HepG2 (cell line): ENCODE measurements at regions of chr2 and their contacts with region 1.

Region 1: GRCh38 chr2:99180755-99181623 is at the starts of genes MITD1 and MRPL30:
- DNase-seq: peak; percentile 97
- ATAC-seq: peak; percentile 91
- H3K4me3 ChIP-seq: peak within 1 kb of the TSS; percentile 68 to 84 (median 84)
- H3K27ac ChIP-seq: peak within 1 kb of the TSS; percentile 83
- H3K4me1 ChIP-seq: peaks cover 46% of the 10 kb centered on the region
- H3K27me3 ChIP-seq: no peaks in the 10 kb centered on the region; a peak in 1 of 5 replicates
- CTCF ChIP-seq: peak; percentile 33; the same call in 1 of the 2 replicates
- EP300 ChIP-seq: peak; percentile 47 to 72
- POLR2A ChIP-seq: peak; percentile 95 to 99
- RAD21 ChIP-seq: no peak; the same call in none of the 2 replicates
- total RNA-seq, gene MITD1: 43.7 and 48.7 TPM in 2 replicates
- total RNA-seq, gene MRPL30: 75.3 and 118 TPM in 2 replicates

Region 2: DNA sequence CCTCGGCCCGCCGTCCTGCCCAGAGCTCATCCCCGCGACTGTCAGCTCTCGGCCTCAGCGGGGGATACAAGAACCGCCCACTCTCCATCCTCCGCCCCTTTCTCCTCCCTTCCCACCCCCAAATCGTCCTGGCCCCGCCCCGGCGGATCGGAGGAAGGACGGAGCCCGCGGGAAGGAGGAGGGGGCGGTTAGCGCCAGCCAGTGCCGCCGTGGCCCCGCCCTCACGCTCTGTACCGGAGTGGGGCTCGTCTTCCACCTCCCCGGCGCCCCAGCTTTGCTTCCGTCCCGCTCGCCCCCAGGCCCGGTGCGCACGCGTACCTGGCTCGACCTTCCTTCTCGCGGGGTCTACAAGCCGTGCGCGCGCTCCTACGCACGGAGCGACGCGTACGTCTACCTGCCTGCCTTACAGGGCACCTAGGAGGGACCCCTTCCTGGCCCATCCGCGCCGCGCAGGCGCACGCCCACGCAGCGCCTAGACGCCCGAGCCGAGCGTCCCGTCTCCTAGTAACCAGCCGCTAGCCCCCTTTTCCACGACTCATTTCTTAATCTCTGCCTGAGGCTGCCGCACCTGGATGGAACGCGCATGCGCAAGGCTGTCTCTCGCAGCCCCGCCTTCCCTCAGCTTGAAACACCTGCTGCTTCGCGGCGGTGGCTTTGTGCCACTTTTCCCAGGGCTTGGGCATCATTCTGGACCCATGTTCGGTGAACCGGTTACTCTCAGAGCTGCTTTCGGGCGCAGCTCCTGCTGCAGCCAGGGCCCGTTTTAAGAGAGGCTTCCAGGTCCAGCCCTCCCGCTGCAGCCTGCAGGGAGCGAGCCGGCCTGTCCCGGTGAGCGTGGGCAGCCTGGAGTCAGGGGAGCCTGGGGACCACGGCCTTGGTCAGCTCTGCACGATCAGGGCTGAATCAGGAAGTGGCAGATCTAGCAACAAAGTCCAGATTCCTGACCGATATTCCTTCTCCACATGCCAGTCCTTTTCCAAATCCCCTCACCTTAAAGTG is 39.6 kb before region 1 on chr2 and contains the start of gene C2orf15:
- CTCF ChIA-PET with region 1: no interaction called
- POLR2A ChIA-PET with region 1: interaction called, 35 read pairs
- in situ Hi-C with region 1: no loop called
- intact Hi-C with region 1: loop called (anchors 1 kb)
- DNase-seq: peak; percentile 94
- ATAC-seq: peak; percentile 93
- H3K4me3 ChIP-seq: peak within 1 kb of the TSS; percentile 75 to 92 (median 85)
- H3K27ac ChIP-seq: peak within 1 kb of the TSS; percentile 74
- H3K4me1 ChIP-seq: peaks cover 28% of the 10 kb centered on the region
- H3K27me3 ChIP-seq: no peaks in the 10 kb centered on the region
- CTCF ChIP-seq: no peak; the same call in 1 of the 2 replicates
- EP300 ChIP-seq: 0 out of 4 replicates have a peak, but pooled peaks of 1 of the 2 experiments have one; percentile 1
- POLR2A ChIP-seq: peak; percentile 89 to 99
- RAD21 ChIP-seq: no peak
- total RNA-seq, gene C2orf15: 8.3 and 12.2 TPM in 2 replicates

Region 3: DNA sequence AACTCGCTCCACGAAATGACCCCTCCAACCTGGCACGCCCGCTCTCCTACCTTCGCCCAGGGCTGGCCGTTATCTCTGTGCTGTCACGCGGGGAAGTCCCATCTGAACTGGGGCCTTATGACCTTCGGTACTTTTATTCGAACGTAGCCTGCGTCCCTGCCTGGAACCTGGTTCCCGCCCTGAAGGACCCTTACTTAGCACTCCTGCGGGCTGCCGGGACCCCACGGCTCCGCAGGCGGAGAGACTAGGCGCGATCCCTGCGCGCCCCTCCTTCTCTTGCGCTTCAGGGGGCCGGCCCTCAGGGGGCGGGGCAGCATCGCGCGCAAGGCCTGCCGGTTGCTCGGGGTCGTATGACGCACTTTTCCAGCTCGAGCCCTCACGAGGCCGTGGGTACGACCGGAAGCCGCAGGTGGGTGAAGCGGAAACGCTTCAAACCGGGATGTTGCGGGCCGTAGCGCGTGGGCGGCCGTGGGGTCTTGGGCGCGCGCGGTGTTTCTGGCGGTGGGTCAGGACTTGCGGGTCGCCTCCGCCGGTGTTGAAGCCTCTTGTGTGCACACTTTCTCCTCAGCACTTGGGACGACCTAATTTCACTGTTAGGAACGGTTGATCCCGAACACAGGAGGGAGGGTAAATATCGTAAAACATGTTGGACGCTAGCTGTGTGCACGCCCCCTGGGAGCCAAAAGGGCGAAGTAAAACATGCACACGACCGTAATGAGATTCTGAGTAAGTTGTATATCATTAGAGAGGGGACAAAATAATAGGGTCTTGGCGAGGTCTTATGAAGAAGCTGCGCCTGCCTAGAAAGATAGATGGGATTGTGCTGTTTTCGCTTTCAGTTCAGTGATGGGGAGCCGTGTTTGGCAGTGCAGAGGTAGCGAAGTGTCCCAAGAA is 26.1 kb before region 1 on chr2 and contains the starts of genes LIPT1 and TSGA10:
- CTCF ChIA-PET with region 1: no interaction called
- POLR2A ChIA-PET with region 1: interaction called, 47 read pairs
- in situ Hi-C with region 1: no loop called
- intact Hi-C with region 1: loop called (anchors 2 kb)
- DNase-seq: peak; percentile 93
- ATAC-seq: peak; percentile 97
- H3K4me3 ChIP-seq: peak within 1 kb of the TSS; percentile 80 to 90 (median 85)
- H3K27ac ChIP-seq: peak within 1 kb of the TSS; percentile 79
- H3K4me1 ChIP-seq: peaks cover 44% of the 10 kb centered on the region
- H3K27me3 ChIP-seq: no peaks in the 10 kb centered on the region; a peak in 1 of 5 replicates
- CTCF ChIP-seq: peak; percentile 54
- EP300 ChIP-seq: no peak; a peak in 1 of 4 replicates
- POLR2A ChIP-seq: peak; percentile 93 to 99
- RAD21 ChIP-seq: peak; percentile 50; the same call in 1 of the 2 replicates
- total RNA-seq, gene LIPT1: 8.0 and 8.3 TPM in 2 replicates
- total RNA-seq, gene TSGA10: 13.1 and 15.0 TPM in 2 replicates

Region 4: DNA sequence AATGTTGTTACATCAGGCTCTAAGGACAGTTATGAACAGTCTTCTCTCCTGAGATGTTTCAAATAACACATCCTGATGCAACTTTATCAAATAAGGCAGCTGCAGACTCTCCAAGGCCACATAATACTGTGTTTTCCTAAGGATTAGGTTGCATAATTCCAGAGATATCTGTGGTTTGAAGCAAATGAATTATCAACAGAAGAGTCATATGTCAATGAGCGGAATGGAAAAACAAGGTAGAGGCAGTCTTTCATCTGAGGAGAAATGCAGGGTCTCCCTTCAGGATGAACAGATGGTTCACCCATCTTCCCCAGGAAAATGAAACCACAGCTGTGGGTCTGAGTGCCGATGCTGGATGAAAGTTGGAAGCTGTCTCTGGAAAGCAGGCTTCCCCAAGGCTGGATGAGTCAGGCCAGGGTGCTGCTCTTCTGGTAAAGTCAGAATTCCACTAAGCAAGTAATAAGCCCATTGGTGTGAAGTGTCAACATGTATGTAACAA is 97.9 kb after region 1 on chr2:
- CTCF ChIA-PET with region 1: no interaction called
- POLR2A ChIA-PET with region 1: interaction called, 3 read pairs
- in situ Hi-C with region 1: no loop called
- intact Hi-C with region 1: loop called (anchors 2 kb)
- DNase-seq: peak; percentile 99
- ATAC-seq: peak; percentile 93
- H3K4me3 ChIP-seq: peak overlapping the region in 2 of 3 experiments; percentile 4 to 49; a peak in 2 of 6 replicates
- H3K27ac ChIP-seq: peak overlapping the region; percentile 64
- H3K4me1 ChIP-seq: peaks cover 39% of the 10 kb centered on the region
- H3K27me3 ChIP-seq: no peaks in the 10 kb centered on the region
- CTCF ChIP-seq: no peak
- EP300 ChIP-seq: peak in 1 of 2 experiments; percentile 97; a peak in 2 of 4 replicates
- POLR2A ChIP-seq: no peak
- RAD21 ChIP-seq: no peak

Region 5: GRCh38 chr2:99403524-99403923 is 222.5 kb after region 1 on chr2:
- CTCF ChIA-PET with region 1: no interaction called
- POLR2A ChIA-PET with region 1: interaction called, 5 read pairs
- in situ Hi-C with region 1: no loop called
- intact Hi-C with region 1: loop called (anchors 1 kb)
- DNase-seq: peak; percentile 88
- ATAC-seq: peak; percentile 95
- H3K4me3 ChIP-seq: no peak overlapping the region
- H3K27ac ChIP-seq: peak overlapping the region; percentile 70
- H3K4me1 ChIP-seq: peaks cover 30% of the 10 kb centered on the region
- H3K27me3 ChIP-seq: no peaks in the 10 kb centered on the region
- CTCF ChIP-seq: peak; percentile 82
- EP300 ChIP-seq: 0 out of 4 replicates have a peak, but pooled peaks of 1 of the 2 experiments have one; percentile 19
- POLR2A ChIP-seq: 0 out of 4 replicates have a peak, but pooled peaks of 1 of the 2 experiments have one; percentile 15
- RAD21 ChIP-seq: peak; percentile 72

Region 6: DNA sequence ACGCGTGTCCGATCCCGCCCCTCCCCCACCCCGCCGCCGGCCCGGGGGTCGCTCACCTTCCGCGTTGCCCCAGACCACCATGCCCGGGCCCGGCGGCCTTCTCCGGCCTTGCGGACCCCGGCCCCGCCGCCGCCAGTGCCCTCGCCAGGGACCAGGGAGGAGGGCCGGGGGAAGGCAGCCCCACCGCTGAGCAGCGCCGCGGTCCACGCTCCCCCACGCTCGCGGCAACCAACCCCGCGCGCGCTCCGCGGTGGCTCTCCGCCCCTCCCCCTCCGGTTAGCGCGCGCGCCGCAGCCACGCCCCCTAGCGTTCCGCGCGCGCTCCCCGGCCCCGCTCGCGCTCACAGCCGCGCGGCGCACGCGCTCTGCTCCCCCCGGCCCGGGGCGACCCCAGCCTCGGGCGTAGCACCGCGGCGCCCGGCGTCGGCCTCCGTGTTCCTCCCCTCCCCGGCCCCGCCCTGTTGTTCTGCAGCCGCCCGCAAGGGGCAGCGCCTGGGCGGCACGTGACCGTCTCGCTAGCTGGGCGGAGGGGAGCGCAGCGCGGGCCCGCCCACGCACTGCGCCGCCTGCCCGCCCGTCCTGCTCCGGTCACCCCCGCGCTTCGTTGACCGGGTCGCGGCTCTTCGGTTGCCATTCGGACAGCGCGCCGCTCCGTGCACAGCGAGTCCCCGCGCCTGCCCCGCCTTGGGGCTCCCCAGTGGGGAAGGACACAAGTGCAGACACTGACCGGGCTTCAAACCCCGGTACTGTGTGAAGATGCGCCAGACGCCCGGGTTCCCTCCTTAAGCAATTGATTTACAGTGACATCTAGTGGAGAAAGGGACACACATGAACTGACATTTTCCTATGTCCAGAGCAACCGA is 309.0 kb after region 1 on chr2 and contains the start of gene REV1:
- CTCF ChIA-PET with region 1: no interaction called
- POLR2A ChIA-PET with region 1: interaction called, 3 read pairs
- in situ Hi-C with region 1: no loop called
- intact Hi-C with region 1: loop called (anchors 10 kb)
- DNase-seq: peak; percentile 91
- ATAC-seq: peak; percentile 86
- H3K4me3 ChIP-seq: peak within 1 kb of the TSS; percentile 79 to 99 (median 97)
- H3K27ac ChIP-seq: peak within 1 kb of the TSS; percentile 76
- H3K4me1 ChIP-seq: peaks cover 42% of the 10 kb centered on the region
- H3K27me3 ChIP-seq: no peaks in the 10 kb centered on the region; a peak in 3 of 5 replicates
- CTCF ChIP-seq: peak; percentile 93
- EP300 ChIP-seq: peak in 1 of 2 experiments; percentile 23; a peak in 2 of 4 replicates
- POLR2A ChIP-seq: peak in 1 of 2 experiments; percentile 80; a peak in 3 of 4 replicates
- RAD21 ChIP-seq: peak; percentile 94
- total RNA-seq, gene REV1: 38.5 and 49.1 TPM in 2 replicates